ENCODE measurements at regions of chr11 and their contacts with region 1.

Region 1: DNA sequence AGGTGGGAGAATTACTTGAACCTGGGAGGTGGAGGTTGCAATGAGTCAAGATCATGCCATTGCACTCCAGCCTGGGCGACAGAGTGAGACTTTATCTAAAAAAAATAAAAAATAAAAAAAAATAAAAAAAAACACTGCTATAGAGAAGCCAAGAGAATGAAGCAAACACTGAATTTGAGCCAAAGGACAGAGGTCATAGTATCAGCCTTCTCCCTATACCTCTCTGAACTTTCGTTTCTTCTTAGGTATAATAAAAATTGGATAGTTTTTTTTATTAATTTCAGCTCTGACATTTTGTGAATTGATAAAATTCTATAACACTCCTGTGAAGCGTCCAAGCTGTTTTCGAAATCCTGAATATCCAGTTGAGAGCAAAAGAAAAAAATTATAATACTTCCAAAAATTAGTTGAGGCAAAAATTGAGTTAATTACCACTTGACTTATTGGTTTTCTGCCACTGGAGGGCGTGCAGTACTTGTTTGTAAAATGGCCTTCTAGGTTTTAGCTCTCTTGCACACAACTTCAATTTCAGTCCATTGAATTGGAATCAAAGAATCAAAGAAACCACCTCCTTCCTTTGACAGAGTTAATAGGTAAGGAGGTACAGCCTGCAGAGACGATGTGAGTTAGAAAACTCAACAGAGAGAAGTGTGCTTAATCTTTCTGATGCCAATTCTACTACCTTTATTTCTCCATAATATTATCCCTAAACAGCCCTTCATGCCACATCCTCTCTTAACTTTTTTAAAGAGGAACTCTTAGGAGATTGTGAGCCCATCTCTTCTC is 143.2 kb downstream of the BBOX1 start:
- DNase-seq: no peak

Region 2: DNA sequence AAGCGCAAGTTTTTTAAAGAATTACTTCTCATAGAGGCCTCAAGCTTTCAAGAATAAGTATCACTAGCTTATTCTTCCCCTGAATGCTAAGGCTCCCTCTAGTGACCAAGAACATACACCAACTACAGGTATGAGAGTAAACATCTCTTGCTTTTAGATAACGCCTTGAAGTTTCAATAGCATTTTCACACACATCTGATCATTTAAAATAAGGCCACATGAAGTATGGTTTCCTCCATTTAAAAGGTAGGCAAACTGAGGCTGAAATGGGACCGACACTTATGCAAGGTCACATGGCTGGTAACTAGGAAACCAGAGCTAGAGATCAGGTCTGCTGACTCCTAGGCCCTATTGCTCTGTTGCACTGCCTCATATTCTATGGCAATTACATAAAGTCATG is 112.6 kb after region 1 on chr11:
- intact Hi-C with region 1: loop called (anchors 2 kb)
- DNase-seq: no peak